Motor neuron (in vitro differentiated cells): ENCODE measurements at regions of chr1 and their contacts with region 1.

Region 1: GRCh38 chr1:226186124-226187018 is at the start of gene ACBD3:
- ATAC-seq: peak; percentile 85 to 97 (median 95)
- H3K4me3 ChIP-seq: peak within 1 kb of the TSS; percentile 78 to 99 (median 92)
- H3K27ac ChIP-seq: peak within 1 kb of the TSS; percentile 98 to 99
- H3K4me1 ChIP-seq: peaks cover 17 to 25% of the 10 kb centered on the region in 2 donors
- total RNA-seq, gene ACBD3: 30.9 to 79.1 (median 56.0) TPM

Region 2: DNA sequence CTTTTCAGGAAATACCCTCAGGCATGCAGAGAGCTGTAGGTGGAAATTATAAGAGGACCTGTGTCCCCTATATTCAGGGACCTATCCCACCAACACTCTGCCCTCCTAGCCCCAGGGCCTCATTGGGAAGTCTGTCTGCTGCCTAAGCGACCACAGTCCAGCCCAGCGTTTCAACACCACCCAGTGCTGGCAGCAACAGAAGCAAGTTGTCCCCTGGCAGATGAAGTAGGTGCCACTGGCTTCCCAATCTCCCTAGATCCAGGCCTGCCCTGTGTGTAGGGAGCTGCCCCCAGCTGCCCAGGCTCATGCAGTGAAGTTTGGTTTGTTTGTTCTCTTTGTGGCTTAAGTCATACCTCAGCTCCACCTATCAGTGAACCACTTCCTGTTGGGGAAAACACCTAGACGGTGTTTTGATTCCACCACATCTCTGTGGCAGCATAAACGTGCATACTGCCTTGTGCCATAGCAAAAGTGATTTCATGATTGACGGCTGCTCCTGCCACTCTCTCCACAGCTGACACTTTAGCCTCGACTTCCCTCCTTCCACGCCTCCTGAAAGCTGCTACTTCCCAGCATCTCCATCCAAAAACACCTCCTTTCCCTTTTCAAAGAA is 289.3 kb before region 1 on chr1:
- in situ Hi-C with region 1: no loop called
- ATAC-seq: peak in 2 of 8 experiments; percentile 32 to 38
- H3K4me3 ChIP-seq: no peak overlapping the region
- H3K27ac ChIP-seq: no peak overlapping the region
- H3K4me1 ChIP-seq: peaks cover 10 to 15% of the 10 kb centered on the region in 2 donors

Region 3: GRCh38 chr1:226135059-226135651 is 51.2 kb before region 1 on chr1:
- in situ Hi-C with region 1: loop called in 1 of 9 experiments (anchors 10 kb)
- ATAC-seq: peak in 7 of 8 experiments; percentile 20 to 39 (median 31)
- H3K4me3 ChIP-seq: no peak overlapping the region
- H3K27ac ChIP-seq: no peak overlapping the region
- H3K4me1 ChIP-seq: no peaks in the 10 kb centered on the region